ENCODE measurements at regions of chr13 and their contacts with region 1.

Region 1: GRCh38 chr13:38670627-38671026 is 16.2 kb upstream of the FREM2 start:
- DNase-seq: no peak
- ATAC-seq: no peak
- H3K4me3 ChIP-seq: no peak overlapping the region
- H3K27ac ChIP-seq: no peak overlapping the region
- H3K4me1 ChIP-seq: no peaks in the 10 kb centered on the region
- H3K27me3 ChIP-seq: peaks cover 0 to 27% (median 4%) of the 10 kb centered on the region in 7 donors
- CTCF ChIP-seq: peak in 1 of 9 donors; percentile 13

Region 2: GRCh38 chr13:38700051-38700450 is 29.4 kb after region 1 on chr13:
- intact Hi-C with region 1: loop called in 1 of 10 experiments (anchors 2 kb)
- DNase-seq: no peak
- ATAC-seq: no peak
- H3K4me3 ChIP-seq: no peak overlapping the region
- H3K27ac ChIP-seq: no peak overlapping the region
- H3K4me1 ChIP-seq: peaks cover 0 to 11% (median 0%) of the 10 kb centered on the region in 9 donors
- H3K27me3 ChIP-seq: no peaks in the 10 kb centered on the region
- CTCF ChIP-seq: no peak

Region 3: DNA sequence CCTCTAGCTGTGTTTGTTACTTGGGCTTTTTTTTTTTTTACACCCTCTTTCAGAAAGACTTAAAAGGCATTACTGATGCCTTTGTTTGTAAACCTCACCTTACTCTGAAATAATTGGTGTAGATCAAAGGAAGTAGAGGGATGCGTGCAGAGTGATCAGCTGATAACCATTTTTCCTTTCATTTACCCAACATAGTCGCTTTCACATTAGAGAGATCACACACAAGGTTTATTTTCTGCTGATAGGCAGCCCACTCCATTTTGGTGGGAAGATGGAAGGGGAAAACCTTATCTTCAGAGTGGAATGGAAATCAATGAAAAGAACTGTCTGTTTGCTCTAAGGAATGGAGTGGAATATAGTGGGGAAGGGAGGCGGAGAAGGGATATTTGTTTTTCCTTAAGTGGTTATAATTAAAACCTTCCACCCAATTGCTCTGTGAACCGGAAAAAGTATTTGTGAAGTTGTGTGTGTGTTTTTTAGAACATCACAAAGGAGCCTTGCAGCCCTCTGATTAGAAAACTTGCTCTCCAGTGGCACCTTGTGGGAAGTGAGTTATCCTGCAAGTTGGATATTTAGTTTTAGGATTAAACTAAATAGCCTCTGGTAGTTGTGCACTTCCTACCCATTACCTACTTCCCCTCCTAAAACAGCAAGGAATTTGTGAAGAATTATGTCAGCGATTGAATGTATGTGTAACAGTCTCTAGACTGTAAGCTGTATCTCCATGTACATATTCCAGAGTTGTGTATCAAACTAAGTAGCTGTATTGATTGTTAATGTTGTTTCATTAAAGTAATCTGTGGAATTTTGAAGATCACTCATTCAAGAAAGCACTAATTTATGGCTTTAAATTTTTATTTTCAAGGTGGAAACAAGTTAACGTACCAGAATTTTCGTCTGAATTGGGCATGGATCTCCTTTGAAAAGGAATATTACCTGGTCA is 93.1 kb after region 1 on chr13:
- intact Hi-C with region 1: loop called in 1 of 10 experiments (anchors 5 kb)
- DNase-seq: no peak
- ATAC-seq: peak in 1 of 8 donors; percentile 45
- H3K4me3 ChIP-seq: no peak overlapping the region
- H3K27ac ChIP-seq: no peak overlapping the region
- H3K4me1 ChIP-seq: peaks cover 0 to 6% (median 0%) of the 10 kb centered on the region in 9 donors
- H3K27me3 ChIP-seq: peaks cover 0 to 20% (median 7%) of the 10 kb centered on the region in 7 donors
- CTCF ChIP-seq: peak; percentile 10 to 63 (median 44)

Region 4: DNA sequence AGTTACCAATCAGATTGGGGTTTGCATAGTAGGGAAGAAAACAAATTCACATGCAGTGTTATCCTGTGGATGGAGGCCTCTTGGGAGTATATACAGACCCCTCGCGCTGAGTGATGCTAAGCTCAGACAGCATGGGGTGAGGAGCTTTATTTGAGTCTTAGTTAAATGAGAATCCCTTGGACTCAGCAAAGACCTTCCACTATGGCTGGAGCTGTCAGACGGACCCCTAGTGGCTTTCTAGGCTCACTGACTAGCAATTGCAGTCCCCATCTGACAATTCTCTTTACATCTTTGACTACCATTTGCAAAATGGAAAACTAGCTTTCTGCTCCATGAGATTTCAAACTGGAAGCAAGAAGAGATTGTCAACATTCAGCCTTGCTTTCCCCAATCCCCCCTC is 229.6 kb after region 1 on chr13:
- intact Hi-C with region 1: no loop called
- DNase-seq: no peak
- ATAC-seq: no peak
- H3K4me3 ChIP-seq: no peak overlapping the region
- H3K27ac ChIP-seq: no peak overlapping the region
- H3K4me1 ChIP-seq: no peaks in the 10 kb centered on the region
- H3K27me3 ChIP-seq: no peaks in the 10 kb centered on the region
- CTCF ChIP-seq: no peak